B cell (primary cell): ENCODE measurements at regions of chr12 and their contacts with region 1.

Region 1: DNA sequence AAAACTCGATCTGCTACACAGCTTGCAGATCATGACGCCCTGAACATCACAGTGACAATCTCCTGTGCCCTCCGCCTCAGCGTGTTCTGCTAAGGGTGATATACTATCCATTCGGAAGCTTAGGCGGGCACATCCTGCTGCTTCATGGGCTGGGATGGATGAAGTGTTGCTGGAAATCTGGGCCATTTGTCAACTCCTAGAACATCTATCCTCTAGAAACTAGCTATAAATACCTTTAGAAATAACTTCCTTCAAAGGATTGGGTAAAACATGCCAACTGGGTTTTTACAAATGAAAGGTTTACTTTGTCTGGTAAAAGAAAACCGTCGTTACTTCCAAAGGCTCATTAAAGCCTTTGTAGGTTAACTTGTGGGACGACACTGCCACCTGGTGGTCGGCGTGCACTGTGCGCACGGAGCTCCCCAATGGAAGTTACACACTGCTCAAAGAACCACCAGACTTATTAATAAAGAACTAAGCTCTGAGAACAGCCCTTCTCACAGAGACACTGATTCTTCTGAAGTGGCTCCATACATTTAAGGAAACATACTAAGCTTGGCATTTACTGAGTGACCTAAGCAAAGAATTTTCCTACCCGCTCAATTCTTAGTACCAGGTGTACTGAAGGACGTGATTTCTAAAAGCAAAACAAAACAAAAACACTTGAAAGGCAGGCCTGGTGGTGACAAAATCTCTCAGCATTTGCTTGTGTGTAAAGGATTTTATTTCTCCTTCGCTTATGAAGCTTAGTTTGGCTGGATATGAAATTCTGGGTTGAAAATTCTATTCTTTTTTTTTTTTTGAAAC is 21.6 kb upstream of the CACNA2D4 start:
- DNase-seq: peak; percentile 89
- ATAC-seq: peak; percentile 97
- H3K4me3 ChIP-seq: no peak overlapping the region
- H3K4me3 Mint-ChIP-seq: no peak overlapping the region
- H3K27ac ChIP-seq: no peak overlapping the region
- H3K27ac Mint-ChIP-seq: peak overlapping the region; percentile 10
- H3K4me1 ChIP-seq: peaks cover 4 to 5% of the 10 kb centered on the region in 2 donors
- H3K4me1 Mint-ChIP-seq: peaks cover 5% of the 10 kb centered on the region
- H3K27me3 ChIP-seq: no peaks in the 10 kb centered on the region
- H3K27me3 Mint-ChIP-seq: no peaks in the 10 kb centered on the region
- CTCF ChIP-seq: peak; percentile 99

Region 2: DNA sequence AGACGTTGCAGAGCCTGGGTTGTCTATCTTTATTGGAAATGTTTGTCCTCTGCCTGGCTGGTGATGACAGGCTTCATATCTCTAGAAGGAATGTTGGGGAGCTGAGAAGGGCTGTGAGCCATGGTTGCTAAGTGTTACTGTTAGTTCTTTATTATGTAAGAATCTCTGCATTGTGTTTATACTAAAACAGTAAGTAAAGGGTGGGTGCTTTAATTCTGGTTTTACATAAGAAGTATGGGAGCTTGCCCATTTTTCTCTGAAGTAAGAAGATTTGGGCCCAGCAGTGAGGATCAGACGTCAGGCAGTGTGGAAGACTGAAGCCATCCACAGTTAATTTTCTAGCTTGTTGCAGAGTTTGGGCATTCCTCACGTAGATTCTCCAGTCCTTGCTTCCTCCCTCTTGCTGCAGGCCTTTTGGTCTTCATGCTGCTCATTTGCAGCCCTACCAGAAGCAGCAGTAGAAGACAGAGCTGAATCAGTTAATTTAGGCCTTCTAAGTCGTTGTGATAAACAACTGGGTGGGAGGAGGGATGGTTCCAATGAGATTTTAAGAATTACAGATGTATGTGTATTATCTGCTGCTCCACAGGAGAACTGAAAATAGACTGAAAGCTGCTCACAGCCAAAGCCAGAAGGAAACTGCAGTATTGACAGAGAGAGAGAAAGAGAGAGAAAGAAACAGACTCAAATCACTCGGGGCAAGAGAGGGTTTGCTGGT is 289.6 kb before region 1 on chr12:
- CTCF ChIA-PET with region 1: interaction called, 86 read pairs
- POLR2A ChIA-PET with region 1: no interaction called
- intact Hi-C with region 1: loop called (anchors 1 kb)
- DNase-seq: no peak
- ATAC-seq: no peak
- H3K4me3 ChIP-seq: no peak overlapping the region
- H3K4me3 Mint-ChIP-seq: no peak overlapping the region
- H3K27ac ChIP-seq: no peak overlapping the region
- H3K27ac Mint-ChIP-seq: no peak overlapping the region
- H3K4me1 ChIP-seq: peaks cover 0 to 19% of the 10 kb centered on the region in 2 donors
- H3K4me1 Mint-ChIP-seq: peaks cover 11% of the 10 kb centered on the region
- H3K27me3 ChIP-seq: no peaks in the 10 kb centered on the region
- H3K27me3 Mint-ChIP-seq: peaks cover 31% of the 10 kb centered on the region
- CTCF ChIP-seq: no peak

Region 3: DNA sequence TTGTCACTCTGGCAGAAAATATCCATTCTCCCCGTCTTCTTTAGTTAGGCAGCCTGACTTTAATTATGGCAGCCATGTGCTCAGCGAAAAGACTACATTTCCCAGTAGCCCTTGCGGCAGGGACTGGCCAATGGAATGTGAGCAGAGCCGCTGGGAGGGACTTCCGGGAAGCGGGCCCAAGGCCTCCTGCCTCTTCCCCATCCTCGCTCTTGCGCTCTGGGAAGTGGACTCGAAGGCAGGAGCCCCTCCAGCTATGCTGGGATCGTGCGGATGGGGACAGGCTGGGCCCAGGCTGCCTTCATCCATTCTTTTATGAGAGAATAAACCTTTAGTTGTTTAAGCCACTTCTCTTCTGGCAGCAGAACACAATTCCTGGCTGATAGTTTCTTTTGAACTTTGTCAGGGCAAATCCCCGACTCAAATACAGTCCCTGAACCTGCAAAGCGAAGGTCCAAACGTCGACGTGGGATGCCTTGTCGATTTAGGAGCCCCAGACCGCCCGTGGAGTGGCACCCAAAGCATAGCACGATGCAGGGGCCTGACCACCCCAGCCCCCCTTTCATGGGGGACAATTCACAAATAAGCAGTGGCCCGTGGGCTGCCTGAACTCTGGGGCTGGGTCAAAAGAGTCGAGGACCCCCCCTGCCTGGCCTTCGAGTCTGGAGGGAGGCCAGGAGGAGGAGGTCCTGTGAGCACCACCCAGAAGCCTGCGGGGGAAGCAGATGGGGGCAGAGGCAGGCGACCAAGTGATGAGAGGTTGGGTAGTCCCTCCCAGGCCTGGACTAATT is 135.3 kb before region 1 on chr12:
- CTCF ChIA-PET with region 1: interaction called, 327 read pairs
- POLR2A ChIA-PET with region 1: interaction called, 6 read pairs
- intact Hi-C with region 1: loop called (anchors 1 kb)
- DNase-seq: peak; percentile 89
- ATAC-seq: peak; percentile 78
- H3K4me3 ChIP-seq: peak overlapping the region in 1 of 5 experiments; percentile 21
- H3K4me3 Mint-ChIP-seq: peak overlapping the region; percentile 54
- H3K27ac ChIP-seq: peak overlapping the region in 1 of 2 donors; percentile 33
- H3K27ac Mint-ChIP-seq: peak overlapping the region; percentile 69
- H3K4me1 ChIP-seq: peaks cover 5 to 23% of the 10 kb centered on the region in 2 donors
- H3K4me1 Mint-ChIP-seq: peaks cover 25% of the 10 kb centered on the region
- H3K27me3 ChIP-seq: no peaks in the 10 kb centered on the region
- H3K27me3 Mint-ChIP-seq: no peaks in the 10 kb centered on the region
- CTCF ChIP-seq: no peak

Region 4: GRCh38 chr12:1917172-1918065 is 22.6 kb before region 1 on chr12:
- CTCF ChIA-PET with region 1: interaction called, 40 read pairs
- POLR2A ChIA-PET with region 1: no interaction called
- intact Hi-C with region 1: no loop called
- DNase-seq: peak; percentile 73
- ATAC-seq: peak; percentile 65
- H3K4me3 ChIP-seq: peak overlapping the region; percentile 48 to 72 (median 67)
- H3K4me3 Mint-ChIP-seq: peak overlapping the region; percentile 90
- H3K27ac ChIP-seq: peak overlapping the region; percentile 85 to 90
- H3K27ac Mint-ChIP-seq: peak overlapping the region; percentile 96
- H3K4me1 ChIP-seq: peaks cover 37 to 38% of the 10 kb centered on the region in 2 donors
- H3K4me1 Mint-ChIP-seq: peaks cover 36% of the 10 kb centered on the region
- H3K27me3 ChIP-seq: no peaks in the 10 kb centered on the region
- H3K27me3 Mint-ChIP-seq: peaks cover 19% of the 10 kb centered on the region
- CTCF ChIP-seq: no peak